Astrocyte of the spinal cord (primary cell): ENCODE measurements at regions of chr2 and their contacts with region 1.

Region 1: GRCh38 chr2:175690113-175690837 is 311.8 kb downstream of the LNPK start:
- DNase-seq: peak; percentile 78
- H3K4me3 ChIP-seq: no peak overlapping the region
- CTCF ChIP-seq: peak; percentile 70

Region 2: DNA sequence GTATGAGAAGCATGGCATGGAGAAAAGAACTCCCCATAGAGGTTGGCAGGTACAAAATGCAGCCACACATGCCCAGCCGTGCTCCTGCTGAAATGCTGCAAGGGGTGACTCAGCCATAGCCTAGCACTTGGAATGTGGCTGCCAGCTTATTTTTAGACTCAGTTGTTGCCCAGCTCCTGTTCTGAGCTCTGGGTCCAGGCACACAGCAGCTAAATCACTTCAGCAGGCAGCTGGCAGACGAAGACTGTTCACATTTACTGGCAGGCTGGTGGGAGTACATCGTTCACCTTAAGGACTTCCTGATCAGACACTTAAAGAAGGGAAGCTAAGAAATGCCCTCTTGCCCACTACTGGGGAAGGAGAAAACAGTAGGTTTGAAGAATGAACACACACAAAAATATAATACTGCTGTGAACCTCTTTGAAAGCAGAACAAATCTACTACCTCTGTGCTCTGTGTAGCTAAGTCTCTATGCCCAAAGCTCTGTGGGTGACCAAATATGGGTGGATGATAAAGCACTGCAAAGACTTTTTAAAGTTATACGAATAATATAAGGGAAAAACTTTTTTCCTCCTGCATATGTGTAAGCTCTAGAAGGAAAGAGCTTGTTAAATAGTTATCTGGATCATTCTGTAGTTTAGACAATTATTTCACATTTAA is 165.6 kb after region 1 on chr2:
- in situ Hi-C with region 1: loop called (anchors 25 kb)
- DNase-seq: peak; percentile 58
- H3K4me3 ChIP-seq: no peak overlapping the region
- CTCF ChIP-seq: no peak